Right ventricle myocardium inferior (tissue), 1 donor: ENCODE measurements at regions of chr5 and their contacts with region 1.

Region 1: DNA sequence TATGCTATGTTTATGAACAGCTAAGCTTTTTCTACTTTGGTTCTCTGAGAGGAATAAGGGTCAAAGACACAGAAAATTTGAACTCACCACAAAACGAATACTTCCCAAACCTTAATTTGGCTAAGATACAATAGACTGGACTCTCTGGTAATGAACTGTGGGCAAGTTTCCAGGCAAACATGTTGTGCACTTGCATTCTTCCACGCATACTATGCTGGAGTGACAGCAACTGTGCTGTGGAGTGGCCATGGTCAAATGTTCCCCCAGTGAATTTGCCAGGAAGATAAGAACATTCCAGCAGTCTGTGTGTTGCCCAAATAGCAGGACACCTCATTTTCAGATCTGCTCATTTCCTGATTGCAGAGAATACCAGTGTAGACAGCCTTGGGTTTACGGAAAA is 275.3 kb upstream of the IL12B start:
- DNase-seq: no peak
- ATAC-seq: peak; percentile 96

Region 2: GRCh38 chr5:159100025-159100781 is 505.4 kb before region 1 on chr5:
- intact Hi-C with region 1: no loop called
- DNase-seq: peak; percentile 95
- ATAC-seq: peak; percentile 89

Region 3: GRCh38 chr5:159504857-159505304 is 100.7 kb before region 1 on chr5:
- intact Hi-C with region 1: loop called (anchors 5 kb)
- DNase-seq: no peak
- ATAC-seq: peak; percentile 84

Region 4: DNA sequence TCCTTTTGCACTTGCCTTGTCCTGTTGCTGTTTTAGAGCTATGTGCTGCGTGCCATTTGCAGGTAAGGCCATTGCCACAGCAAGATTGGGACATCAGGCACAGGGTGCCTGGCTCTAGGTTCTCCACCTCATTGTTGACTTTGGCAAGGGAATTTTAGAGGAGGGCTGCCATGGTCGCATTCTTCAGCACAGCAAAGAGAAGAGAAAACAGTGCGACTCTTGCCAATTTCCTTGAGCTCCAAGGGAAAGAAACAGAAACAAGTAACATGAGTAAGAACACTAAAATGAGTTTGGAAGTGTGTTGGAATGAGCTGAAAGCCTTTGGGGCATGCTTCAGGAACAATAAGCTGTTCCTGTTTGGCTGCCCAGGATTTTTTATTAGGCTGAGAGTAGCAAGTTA is 87.2 kb before region 1 on chr5:
- intact Hi-C with region 1: no loop called
- DNase-seq: no peak
- ATAC-seq: no peak

Region 5: DNA sequence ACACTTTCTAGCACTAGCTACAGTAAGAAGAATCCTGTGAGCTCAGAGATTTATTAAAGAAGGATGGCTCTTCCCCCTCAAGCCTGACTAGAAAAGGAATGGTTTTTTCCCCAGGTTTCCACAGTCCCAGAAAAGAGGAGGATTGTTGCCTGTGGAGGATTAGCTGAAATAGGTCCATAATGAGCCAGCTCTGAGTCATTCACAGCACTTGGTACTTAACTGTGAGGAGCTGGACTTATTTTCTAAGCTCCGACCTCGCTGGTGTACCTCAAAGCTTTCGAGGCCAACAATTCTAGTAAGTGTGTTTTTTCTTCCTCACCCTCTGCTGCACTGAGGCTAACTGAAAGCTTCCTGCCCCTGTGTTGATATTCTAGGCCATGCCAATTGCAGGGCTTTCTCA is 52.8 kb before region 1 on chr5:
- intact Hi-C with region 1: no loop called
- DNase-seq: no peak
- ATAC-seq: no peak

Region 6: GRCh38 chr5:159650803-159651202 is 45.2 kb after region 1 on chr5:
- intact Hi-C with region 1: loop called (anchors 2 kb)
- DNase-seq: no peak
- ATAC-seq: peak; percentile 63

Region 7: DNA sequence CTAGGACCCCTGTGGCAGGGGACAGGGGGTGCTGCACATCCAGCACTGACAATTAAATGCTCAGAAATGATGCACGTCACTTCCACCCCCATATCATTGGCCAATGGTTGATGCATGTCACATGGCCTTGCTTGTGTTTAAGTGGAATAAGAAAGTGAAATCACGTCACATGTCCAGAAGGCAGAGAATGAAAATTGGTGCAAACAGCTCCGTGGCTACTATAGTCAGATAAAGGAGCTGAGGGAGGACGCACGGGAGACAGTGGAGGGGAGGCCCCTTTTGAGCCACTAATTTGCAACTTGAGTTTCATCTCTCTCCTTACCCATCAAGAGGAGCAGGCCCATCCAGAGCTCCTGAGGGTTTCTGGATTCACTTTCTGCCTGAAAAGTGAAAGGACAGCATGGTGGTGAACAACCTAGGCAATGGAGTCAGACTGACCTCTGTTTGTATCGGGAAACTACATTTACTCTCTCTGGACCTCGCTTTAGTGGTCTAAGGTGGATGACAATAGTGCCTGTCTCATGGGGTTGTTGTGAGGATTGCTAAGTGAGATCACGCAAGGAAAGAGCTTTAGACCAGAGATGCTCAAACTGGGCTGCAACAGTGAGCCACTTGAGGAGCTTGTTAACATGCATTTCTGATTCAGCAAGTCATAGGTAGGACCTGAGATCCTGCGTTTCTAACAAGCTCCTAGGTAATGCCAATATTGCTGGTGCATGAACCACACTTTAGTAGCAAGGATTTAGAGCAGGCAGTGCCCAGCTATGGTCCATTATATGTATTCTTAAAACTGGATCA is 176.8 kb after region 1 on chr5:
- intact Hi-C with region 1: no loop called
- DNase-seq: no peak
- ATAC-seq: no peak